ENCODE measurements at regions of chr16 and their contacts with region 1.

Region 1: DNA sequence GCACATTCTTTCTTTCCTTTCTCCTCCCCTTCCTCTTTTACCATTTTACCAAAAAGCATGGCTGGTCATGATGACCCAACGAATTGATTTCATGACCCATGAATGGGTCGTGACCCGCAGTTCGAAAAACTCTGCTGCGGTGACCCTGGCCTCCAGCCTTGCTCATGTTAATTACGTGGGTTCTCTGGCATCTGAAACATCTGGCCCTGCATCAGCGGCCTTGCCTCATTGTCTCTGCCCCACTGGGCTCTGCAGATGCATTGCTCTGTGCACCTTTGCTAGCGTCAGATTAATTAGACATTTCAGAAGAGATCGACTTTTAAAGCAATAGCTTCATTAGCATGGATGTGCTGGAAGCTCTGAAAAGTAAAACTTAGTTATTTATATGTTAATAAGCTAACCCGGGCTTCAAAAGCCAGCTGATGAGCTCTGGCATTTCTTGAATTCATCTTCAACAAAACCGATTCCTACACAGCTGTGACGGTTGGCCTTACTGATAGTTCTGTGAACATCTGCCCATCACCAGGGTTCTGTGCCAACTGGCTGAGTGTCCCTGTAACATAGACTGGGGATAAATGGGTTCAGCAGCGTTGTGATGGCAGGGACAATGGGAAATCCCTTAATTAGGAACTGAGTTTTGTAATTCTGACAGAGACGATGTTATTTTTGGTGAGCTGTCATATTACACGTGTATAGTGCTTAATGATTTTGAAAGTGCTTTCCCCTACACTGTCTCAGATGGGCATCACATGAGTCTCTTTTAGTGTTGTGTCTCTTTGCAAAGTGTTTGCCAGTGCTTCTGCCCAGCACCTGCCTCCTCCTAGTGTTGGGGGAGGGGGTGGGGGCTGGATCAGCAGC is 225.9 kb upstream of the EEF2KMT start:
- DNase-seq: no peak
- ATAC-seq: no peak
- H3K4me3 ChIP-seq: no peak overlapping the region
- H3K27ac ChIP-seq: no peak overlapping the region
- H3K4me1 ChIP-seq: no peaks in the 10 kb centered on the region
- H3K27me3 ChIP-seq: no peaks in the 10 kb centered on the region
- CTCF ChIP-seq: no peak
- POLR2A ChIP-seq: no peak

Region 2: GRCh38 chr16:5379954-5380353 is 56.4 kb after region 1 on chr16:
- intact Hi-C with region 1: loop called in 1 of 10 experiments (anchors 10 kb)
- DNase-seq: no peak
- ATAC-seq: no peak
- H3K4me3 ChIP-seq: no peak overlapping the region
- H3K27ac ChIP-seq: no peak overlapping the region
- H3K4me1 ChIP-seq: no peaks in the 10 kb centered on the region
- H3K27me3 ChIP-seq: peaks cover 0 to 5% (median 0%) of the 10 kb centered on the region in 9 donors
- CTCF ChIP-seq: no peak
- POLR2A ChIP-seq: no peak

Measured in heart left ventricle (tissue), 16 donors.